Aorta (tissue), 5 donors: ENCODE measurements at regions of chr1 and their contacts with region 1.

Region 1: DNA sequence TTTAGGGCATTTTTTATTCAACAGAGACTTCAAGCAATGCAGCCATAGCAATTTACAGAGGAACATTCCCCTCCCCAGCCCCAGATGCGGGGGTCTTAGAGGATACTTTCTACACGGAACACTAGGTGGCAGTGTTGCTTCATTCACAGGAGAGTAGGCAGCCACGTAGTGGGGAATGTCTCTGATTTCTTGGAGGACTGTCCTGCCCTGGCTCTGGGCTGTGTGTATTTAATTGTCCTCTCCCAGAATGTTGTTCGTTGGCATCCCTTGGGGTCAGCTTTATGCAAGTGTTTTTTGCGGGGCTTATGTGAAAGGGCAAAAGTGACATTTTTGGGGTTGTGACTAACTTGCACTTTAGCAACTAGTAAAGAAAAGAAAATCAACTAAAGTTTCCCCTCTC is 96.9 kb downstream of the PAPPA2 start:
- DNase-seq: peak in 1 of 2 donors; percentile 54
- ATAC-seq: peak; percentile 89
- H3K4me3 ChIP-seq: no peak overlapping the region
- H3K27ac ChIP-seq: no peak overlapping the region
- H3K4me1 ChIP-seq: peaks cover 2 to 10% of the 10 kb centered on the region in 2 donors
- H3K27me3 ChIP-seq: no peaks in the 10 kb centered on the region

Region 2: DNA sequence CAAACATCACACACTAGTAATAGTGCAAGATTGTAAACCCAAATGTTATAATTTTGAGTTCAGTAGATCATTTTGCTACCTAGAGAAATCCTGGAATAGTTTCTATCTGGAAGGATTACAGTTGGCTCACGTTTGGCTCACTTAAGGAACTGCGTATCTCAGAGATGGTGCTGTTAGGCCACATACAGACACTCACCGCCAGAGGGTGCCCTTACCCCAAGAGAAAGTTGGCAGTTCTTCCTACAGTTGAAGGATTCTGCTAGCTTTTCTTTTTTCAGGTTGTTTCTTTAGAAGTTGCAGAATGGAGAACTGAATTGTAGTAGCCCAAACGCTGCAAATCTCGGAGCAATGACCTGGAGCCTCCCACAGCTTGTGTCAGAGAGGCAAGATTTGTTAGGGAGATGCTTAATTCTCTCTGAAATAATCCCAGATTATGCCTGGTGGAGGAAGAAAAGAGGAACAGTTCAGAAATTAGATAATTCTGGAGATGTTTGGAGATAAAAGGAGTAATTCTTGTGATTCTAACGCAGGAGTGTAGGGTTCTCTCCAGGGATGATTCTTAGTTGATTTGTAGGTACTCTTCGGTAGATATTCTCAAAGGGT is 184.8 kb before region 1 on chr1:
- intact Hi-C with region 1: loop called in 1 of 2 experiments (anchors 5 kb)
- DNase-seq: peak; percentile 85 to 90
- ATAC-seq: peak; percentile 89
- H3K4me3 ChIP-seq: no peak overlapping the region
- H3K27ac ChIP-seq: no peak overlapping the region
- H3K4me1 ChIP-seq: no peaks in the 10 kb centered on the region
- H3K27me3 ChIP-seq: no peaks in the 10 kb centered on the region

Region 3: GRCh38 chr1:176656257-176656995 is 96.5 kb after region 1 on chr1:
- intact Hi-C with region 1: loop called in 1 of 2 experiments (anchors 5 kb)
- DNase-seq: no peak
- ATAC-seq: peak; percentile 89
- H3K4me3 ChIP-seq: no peak overlapping the region
- H3K27ac ChIP-seq: peak overlapping the region; percentile 100
- H3K4me1 ChIP-seq: peaks cover 5% of the 10 kb centered on the region in 2 donors
- H3K27me3 ChIP-seq: no peaks in the 10 kb centered on the region

Region 4: DNA sequence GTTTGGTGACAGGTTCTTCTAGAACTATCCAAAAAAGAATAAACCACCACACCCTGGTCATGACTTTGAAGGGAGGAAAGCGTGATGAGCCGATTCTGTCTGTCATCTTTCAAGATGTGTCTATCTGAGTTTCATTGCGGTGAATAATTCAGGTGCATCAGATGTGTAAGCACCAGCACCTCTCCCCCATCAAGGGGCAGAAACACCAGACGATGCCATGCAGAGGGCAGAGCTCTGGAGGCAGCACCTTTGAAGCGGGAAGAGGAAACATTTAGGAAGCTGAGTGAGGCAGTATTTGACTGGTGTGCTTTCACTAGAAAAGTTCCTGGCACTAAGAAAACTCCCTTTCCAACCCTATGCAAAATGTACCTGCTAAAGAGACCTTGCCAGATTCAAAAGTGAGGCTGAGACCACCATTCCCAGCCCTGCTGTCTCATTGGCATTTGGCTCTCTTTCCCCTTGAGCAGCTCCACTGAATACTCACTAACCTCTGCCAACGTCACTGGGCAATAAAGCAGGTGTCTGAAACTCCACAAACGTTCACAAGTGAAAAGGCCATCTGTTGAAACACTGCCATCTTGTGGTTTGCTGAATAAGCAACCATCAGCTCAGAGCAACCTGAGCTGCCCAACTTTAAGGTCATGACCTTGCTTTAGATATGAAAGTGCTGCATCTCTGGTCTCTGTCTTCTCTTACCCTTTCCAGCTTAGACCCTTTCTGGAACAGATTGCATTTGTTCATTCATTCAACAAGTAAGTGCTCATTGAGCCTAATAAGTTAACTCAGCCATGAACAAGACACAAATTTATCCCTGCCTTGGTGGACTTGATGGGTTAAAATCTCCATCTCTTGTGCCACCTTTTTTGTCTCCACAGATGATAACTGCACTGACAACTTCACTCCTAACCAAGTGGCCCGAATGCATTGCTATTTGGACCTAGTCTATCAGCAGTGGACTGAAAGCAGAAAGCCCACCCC is 131.7 kb after region 1 on chr1:
- intact Hi-C with region 1: loop called (anchors 1 to 2 kb)
- DNase-seq: no peak
- ATAC-seq: peak; percentile 68
- H3K4me3 ChIP-seq: no peak overlapping the region
- H3K27ac ChIP-seq: no peak overlapping the region
- H3K4me1 ChIP-seq: no peaks in the 10 kb centered on the region
- H3K27me3 ChIP-seq: no peaks in the 10 kb centered on the region

Region 5: DNA sequence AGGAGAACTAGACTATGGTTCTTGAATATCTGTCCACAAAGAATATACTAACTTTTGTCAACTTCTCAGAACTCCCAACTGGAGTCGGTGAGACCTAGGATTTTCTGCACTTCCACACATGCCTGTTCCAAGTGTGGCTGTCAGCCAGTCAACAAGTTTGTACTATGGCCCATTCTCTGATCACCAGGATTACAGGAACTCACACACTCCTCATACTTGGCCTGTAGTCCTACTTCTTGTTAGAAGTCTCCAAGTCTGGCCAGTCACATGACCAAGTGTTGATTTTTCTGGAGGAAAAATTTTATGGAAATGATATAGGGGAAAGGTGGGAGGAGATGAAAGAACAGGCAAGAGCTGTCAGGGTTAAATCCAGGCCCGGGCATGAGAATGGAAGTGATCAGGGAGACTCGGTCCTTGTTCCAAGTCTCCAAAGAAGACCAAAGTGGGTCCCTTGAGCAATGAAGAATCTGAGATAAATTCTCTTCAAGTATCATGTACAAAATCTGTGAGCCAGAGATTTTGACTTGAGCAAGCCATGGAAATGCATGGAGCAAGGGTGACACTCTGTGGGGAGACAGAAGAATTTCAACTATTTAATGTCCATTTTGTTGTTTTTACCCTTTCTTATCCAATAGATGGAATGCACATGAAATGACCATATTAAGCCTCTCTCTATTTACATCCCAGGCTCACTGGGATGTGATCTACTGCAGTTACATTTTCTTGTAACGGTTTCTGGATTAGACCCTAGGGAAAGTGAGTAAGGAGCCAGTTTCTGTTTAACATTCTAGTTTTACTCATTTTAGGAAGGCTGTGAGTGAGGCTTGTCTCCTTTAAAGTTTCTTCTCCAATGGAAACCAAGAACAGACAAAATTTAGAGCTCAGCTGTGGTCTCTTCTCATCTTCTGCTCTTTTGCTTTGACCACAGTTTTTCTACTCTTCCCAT is 283.7 kb after region 1 on chr1:
- intact Hi-C with region 1: loop called (anchors 2 to 5 kb)
- DNase-seq: peak in 1 of 2 donors; percentile 50
- ATAC-seq: peak; percentile 76
- H3K4me3 ChIP-seq: no peak overlapping the region
- H3K27ac ChIP-seq: no peak overlapping the region
- H3K4me1 ChIP-seq: no peaks in the 10 kb centered on the region
- H3K27me3 ChIP-seq: no peaks in the 10 kb centered on the region

Region 6: GRCh38 chr1:176880954-176881595 is 321.2 kb after region 1 on chr1:
- intact Hi-C with region 1: loop called in 1 of 2 experiments (anchors 2 kb)
- DNase-seq: peak; percentile 69 to 91
- ATAC-seq: peak; percentile 74
- H3K4me3 ChIP-seq: no peak overlapping the region
- H3K27ac ChIP-seq: no peak overlapping the region
- H3K4me1 ChIP-seq: peaks cover 0 to 2% of the 10 kb centered on the region in 2 donors
- H3K27me3 ChIP-seq: no peaks in the 10 kb centered on the region

Region 7: DNA sequence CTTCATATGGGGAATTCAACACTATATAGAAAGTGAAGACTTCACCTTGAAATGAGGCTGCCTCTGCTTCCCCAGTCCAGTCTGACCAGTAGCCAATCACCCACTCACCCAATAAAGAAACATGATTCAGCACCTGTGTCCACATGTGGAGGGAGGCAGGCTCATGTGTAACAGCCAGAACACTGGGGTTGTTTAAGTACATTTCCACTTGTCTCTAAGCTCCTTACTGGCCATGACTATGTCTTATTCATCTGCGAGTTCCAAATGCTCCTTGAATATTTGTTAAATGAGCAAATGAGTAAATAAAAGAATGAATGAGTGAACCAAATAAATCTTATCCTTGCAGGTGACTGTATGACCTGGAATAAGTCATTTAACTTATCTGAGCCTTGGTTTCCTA is 711.0 kb after region 1 on chr1:
- intact Hi-C with region 1: no loop called
- DNase-seq: no peak
- ATAC-seq: no peak
- H3K4me3 ChIP-seq: no peak overlapping the region
- H3K27ac ChIP-seq: no peak overlapping the region
- H3K4me1 ChIP-seq: no peaks in the 10 kb centered on the region
- H3K27me3 ChIP-seq: no peaks in the 10 kb centered on the region